CD8-positive, alpha-beta memory T cell (primary cell): ENCODE measurements at regions of chr13 and their contacts with region 1.

Region 1: GRCh38 chr13:44435142-44435982 is 61.7 kb downstream of the SERP2 start:
- DNase-seq: peak; percentile 74 to 93 (median 87)
- H3K4me3 ChIP-seq: peak overlapping the region; percentile 76
- H3K4me3 Mint-ChIP-seq: peak overlapping the region; percentile 75 to 94 (median 87)
- H3K27ac ChIP-seq: peak overlapping the region; percentile 71
- H3K27ac Mint-ChIP-seq: peak overlapping the region; percentile 39 to 99 (median 84)
- H3K4me1 ChIP-seq: peaks cover 22% of the 10 kb centered on the region
- H3K4me1 Mint-ChIP-seq: peaks cover 29 to 37% (median 31%) of the 10 kb centered on the region in 3 donors
- H3K27me3 ChIP-seq: peaks cover 7% of the 10 kb centered on the region
- H3K27me3 Mint-ChIP-seq: peaks cover 6 to 9% of the 10 kb centered on the region in 2 donors

Region 2: DNA sequence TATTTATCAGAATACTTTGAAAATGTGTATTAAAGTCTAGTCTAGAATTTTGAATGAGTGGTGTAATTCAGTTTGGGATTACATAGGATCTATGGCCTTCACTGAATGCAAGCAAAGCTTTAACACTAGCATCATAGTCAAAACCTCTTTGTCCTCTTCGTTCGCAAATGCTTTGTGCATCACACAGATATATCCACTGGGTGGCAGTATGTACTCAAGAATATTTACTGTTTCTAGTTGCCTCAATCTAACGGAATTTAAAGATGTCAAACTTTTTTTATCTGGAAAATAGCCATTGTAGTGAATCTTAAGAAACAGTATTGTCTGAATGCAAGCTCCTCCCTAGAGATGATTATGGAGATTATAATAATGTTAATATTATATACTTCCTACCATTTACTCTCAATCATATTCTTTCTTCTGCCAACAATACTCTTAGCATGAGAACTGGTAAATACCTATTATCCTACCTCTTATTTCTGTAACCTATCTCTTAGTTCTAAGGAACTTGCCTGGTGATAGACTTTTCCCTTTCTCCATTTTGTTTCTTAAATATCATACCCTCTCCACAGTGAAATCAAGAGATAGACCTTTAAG is 529.8 kb before region 1 on chr13:
- CTCF ChIA-PET with region 1: interaction called, 21 read pairs
- POLR2A ChIA-PET with region 1: interaction called, 4 read pairs
- DNase-seq: peak in 2 of 5 donors; percentile 31 to 46
- H3K4me3 ChIP-seq: no peak overlapping the region
- H3K4me3 Mint-ChIP-seq: no peak overlapping the region
- H3K27ac ChIP-seq: no peak overlapping the region
- H3K27ac Mint-ChIP-seq: no peak overlapping the region
- H3K4me1 ChIP-seq: no peaks in the 10 kb centered on the region
- H3K4me1 Mint-ChIP-seq: peaks cover 1 to 5% (median 4%) of the 10 kb centered on the region in 3 donors
- H3K27me3 ChIP-seq: peaks cover 5% of the 10 kb centered on the region
- H3K27me3 Mint-ChIP-seq: peaks cover 5 to 35% of the 10 kb centered on the region in 2 donors

Region 3: DNA sequence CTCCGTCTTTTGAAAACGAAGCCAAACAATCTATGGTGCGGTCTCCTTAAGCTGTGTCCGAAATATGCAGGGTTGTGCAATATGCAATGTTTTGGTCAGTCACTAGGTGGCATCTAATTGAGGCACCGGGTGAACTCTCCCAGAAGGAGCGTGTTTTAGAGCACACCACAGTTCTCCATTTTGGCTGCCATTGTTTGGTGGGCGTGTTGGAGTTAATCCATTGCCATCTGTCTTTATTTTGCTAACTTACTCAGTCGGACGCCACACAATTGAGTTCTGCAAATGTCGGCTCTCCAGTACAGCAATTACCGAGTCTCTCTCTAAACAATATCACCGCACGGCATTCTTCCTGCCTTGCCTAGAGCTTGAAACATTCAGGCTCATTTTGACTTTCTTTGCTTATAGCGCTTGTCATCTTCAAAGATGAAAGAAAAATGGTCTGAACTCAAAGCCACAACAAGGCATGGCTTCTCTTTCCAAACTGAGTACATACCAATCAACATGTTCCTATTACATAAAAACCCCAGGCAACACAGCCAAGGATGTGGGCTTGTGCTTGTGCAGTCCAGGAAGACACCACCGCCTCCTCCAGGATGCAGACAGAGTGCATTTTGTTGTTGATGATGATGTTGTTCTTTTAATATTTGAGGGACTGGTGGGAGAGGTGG is 243.7 kb before region 1 on chr13:
- CTCF ChIA-PET with region 1: interaction called, 11 read pairs
- POLR2A ChIA-PET with region 1: interaction called, 4 read pairs
- DNase-seq: peak in 4 of 5 donors; percentile 4 to 65 (median 47)
- H3K4me3 ChIP-seq: no peak overlapping the region
- H3K4me3 Mint-ChIP-seq: peak overlapping the region in 6 of 7 donors; percentile 19 to 76 (median 36)
- H3K27ac ChIP-seq: no peak overlapping the region
- H3K27ac Mint-ChIP-seq: peak overlapping the region; percentile 37 to 88 (median 69)
- H3K4me1 ChIP-seq: peaks cover 4% of the 10 kb centered on the region
- H3K4me1 Mint-ChIP-seq: peaks cover 15 to 34% (median 29%) of the 10 kb centered on the region in 3 donors
- H3K27me3 ChIP-seq: no peaks in the 10 kb centered on the region
- H3K27me3 Mint-ChIP-seq: peaks cover 0 to 1% of the 10 kb centered on the region in 2 donors

Region 4: GRCh38 chr13:44300895-44301638 is 134.3 kb before region 1 on chr13:
- CTCF ChIA-PET with region 1: no interaction called
- POLR2A ChIA-PET with region 1: no interaction called
- DNase-seq: no peak
- H3K4me3 ChIP-seq: no peak overlapping the region
- H3K4me3 Mint-ChIP-seq: no peak overlapping the region
- H3K27ac ChIP-seq: no peak overlapping the region
- H3K27ac Mint-ChIP-seq: no peak overlapping the region
- H3K4me1 ChIP-seq: peaks cover 2% of the 10 kb centered on the region
- H3K4me1 Mint-ChIP-seq: peaks cover 0 to 11% (median 7%) of the 10 kb centered on the region in 3 donors
- H3K27me3 ChIP-seq: no peaks in the 10 kb centered on the region
- H3K27me3 Mint-ChIP-seq: peaks cover 15 to 48% of the 10 kb centered on the region in 2 donors

Region 5: GRCh38 chr13:44449999-44450708 is 14.8 kb after region 1 on chr13:
- CTCF ChIA-PET with region 1: no interaction called
- POLR2A ChIA-PET with region 1: no interaction called
- DNase-seq: no peak
- H3K4me3 ChIP-seq: no peak overlapping the region
- H3K4me3 Mint-ChIP-seq: no peak overlapping the region
- H3K27ac ChIP-seq: no peak overlapping the region
- H3K27ac Mint-ChIP-seq: peak overlapping the region in 2 of 8 donors; percentile 13 to 18
- H3K4me1 ChIP-seq: no peaks in the 10 kb centered on the region
- H3K4me1 Mint-ChIP-seq: peaks cover 0 to 3% (median 0%) of the 10 kb centered on the region in 3 donors
- H3K27me3 ChIP-seq: no peaks in the 10 kb centered on the region
- H3K27me3 Mint-ChIP-seq: no peaks in the 10 kb centered on the region

Region 6: DNA sequence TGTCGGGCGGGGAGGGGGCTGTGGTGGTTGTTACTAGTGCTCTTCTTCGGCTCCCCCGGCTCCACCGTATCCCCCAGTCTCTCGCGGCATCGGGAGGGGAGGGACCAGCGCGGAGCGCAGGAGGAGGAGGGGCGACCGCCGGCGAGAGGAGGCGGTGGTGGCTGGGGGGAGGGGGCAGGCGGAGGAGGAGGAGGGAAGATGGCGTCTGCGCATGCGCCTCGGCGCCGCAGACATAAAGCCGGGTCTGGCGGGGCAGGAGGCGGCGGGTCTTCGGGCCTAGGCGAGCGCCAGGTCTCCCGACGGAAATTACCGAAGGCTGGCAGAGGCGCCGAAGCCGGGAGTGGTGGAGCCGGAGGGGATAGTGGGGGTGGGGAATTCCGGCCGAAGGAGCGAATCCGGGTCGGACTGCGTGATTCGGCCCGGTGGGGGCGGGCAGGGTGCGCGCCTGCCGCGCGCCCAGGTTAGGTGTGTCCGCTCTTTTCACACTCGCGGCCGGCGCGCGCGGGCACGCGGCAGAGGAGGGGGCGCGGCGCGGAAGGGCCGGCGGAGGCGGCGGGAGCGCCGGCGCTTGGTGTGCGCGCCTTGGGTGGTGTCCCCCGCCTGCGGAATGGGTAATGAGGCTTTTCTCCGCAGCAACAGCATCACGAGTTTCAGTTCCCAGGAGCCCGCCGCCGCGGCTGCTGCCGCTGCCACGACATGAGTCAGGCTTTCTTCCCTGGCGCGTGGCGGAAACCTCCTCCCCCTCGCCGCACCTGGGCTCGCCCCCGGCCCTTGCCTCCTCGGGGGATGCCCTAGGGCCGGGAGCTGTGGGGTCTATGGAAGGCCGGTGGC is 142.1 kb after region 1 on chr13:
- CTCF ChIA-PET with region 1: no interaction called
- POLR2A ChIA-PET with region 1: no interaction called
- DNase-seq: peak; percentile 93 to 97 (median 94)
- H3K4me3 ChIP-seq: peak overlapping the region; percentile 80
- H3K4me3 Mint-ChIP-seq: peak overlapping the region; percentile 91 to 100 (median 96)
- H3K27ac ChIP-seq: peak overlapping the region; percentile 78
- H3K27ac Mint-ChIP-seq: peak overlapping the region; percentile 92 to 99 (median 93)
- H3K4me1 ChIP-seq: peaks cover 37% of the 10 kb centered on the region
- H3K4me1 Mint-ChIP-seq: peaks cover 37 to 40% (median 38%) of the 10 kb centered on the region in 3 donors
- H3K27me3 ChIP-seq: no peaks in the 10 kb centered on the region
- H3K27me3 Mint-ChIP-seq: peaks cover 0 to 4% of the 10 kb centered on the region in 2 donors